Activated CD4-positive, alpha-beta memory T cell treated with anti-CD3 and anti-CD28 coated beads for 36 hours (primary cell): ENCODE measurements at regions of chr17 and their contacts with region 1.

Region 1: GRCh38 chr17:56297184-56297583 is 143.9 kb downstream of the ANKFN1 start:
- DNase-seq: peak; percentile 47
- H3K4me3 Mint-ChIP-seq: no peak overlapping the region
- H3K27ac Mint-ChIP-seq: no peak overlapping the region
- H3K4me1 Mint-ChIP-seq: peaks cover 11% of the 10 kb centered on the region
- H3K27me3 Mint-ChIP-seq: no peaks in the 10 kb centered on the region

Region 2: GRCh38 chr17:56020369-56020768 is 276.8 kb before region 1 on chr17:
- CTCF ChIA-PET with region 1: no interaction called
- POLR2A ChIA-PET with region 1: no interaction called
- intact Hi-C with region 1: no loop called
- DNase-seq: no peak
- H3K4me3 Mint-ChIP-seq: no peak overlapping the region
- H3K27ac Mint-ChIP-seq: no peak overlapping the region
- H3K4me1 Mint-ChIP-seq: peaks cover 19% of the 10 kb centered on the region
- H3K27me3 Mint-ChIP-seq: peaks cover 17% of the 10 kb centered on the region

Region 3: DNA sequence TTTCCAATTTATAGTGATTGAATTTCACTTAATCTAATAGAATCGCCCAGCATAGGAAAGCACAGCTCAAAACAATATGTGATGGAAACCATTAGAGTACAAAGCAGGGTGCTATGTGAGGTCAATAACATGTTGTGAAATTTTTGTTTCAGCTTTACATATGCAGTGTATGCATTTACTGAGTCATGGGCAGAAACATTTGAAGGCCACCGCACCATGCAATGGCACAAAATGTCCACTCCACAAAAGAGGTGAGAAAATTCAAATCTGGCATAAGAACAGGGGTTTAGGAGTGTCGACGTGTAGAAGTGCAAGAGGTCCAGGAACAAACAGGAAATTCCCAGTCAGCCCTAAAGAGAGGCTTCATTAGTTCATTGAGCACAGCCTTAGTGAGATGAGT is 12.7 kb before region 1 on chr17:
- CTCF ChIA-PET with region 1: no interaction called
- POLR2A ChIA-PET with region 1: no interaction called
- intact Hi-C with region 1: no loop called
- DNase-seq: no peak
- H3K4me3 Mint-ChIP-seq: no peak overlapping the region
- H3K27ac Mint-ChIP-seq: no peak overlapping the region
- H3K4me1 Mint-ChIP-seq: no peaks in the 10 kb centered on the region
- H3K27me3 Mint-ChIP-seq: peaks cover 1% of the 10 kb centered on the region

Region 4: DNA sequence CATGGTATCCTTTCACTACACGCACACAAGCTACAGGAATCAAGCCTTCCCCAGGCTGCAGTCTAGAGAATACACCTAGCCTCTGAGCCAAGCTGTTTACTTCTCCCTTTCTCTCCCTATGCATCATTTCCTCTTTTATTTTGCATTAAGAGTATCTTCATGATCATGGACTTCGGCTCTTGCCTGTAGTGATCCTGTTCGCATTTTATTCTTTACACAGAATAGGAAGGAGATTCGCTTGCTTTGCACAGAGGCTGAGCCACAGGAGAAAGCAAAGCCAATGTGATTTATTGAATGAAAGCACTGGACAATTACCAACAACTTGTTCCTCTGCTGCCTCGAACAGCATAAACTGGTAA is 28.8 kb after region 1 on chr17:
- CTCF ChIA-PET with region 1: no interaction called
- POLR2A ChIA-PET with region 1: no interaction called
- intact Hi-C with region 1: loop called (anchors 1 kb)
- DNase-seq: no peak
- H3K4me3 Mint-ChIP-seq: no peak overlapping the region
- H3K27ac Mint-ChIP-seq: no peak overlapping the region
- H3K4me1 Mint-ChIP-seq: no peaks in the 10 kb centered on the region
- H3K27me3 Mint-ChIP-seq: peaks cover 8% of the 10 kb centered on the region